Caco-2 (cell line): ENCODE measurements at regions of chr6 and their contacts with region 1.

Region 1: GRCh38 chr6:108558372-108559096 is 2.2 kb upstream of the FOXO3 start:
- DNase-seq: peak; percentile 97 to 98
- H3K4me3 ChIP-seq: peak overlapping the region; percentile 77
- H3K4me3 Mint-ChIP-seq: peak overlapping the region; percentile 95
- H3K27ac Mint-ChIP-seq: peak overlapping the region; percentile 94
- H3K4me1 ChIP-seq: peaks cover 15% of the 10 kb centered on the region
- H3K4me1 Mint-ChIP-seq: peaks cover 27% of the 10 kb centered on the region
- H3K27me3 ChIP-seq: no peaks in the 10 kb centered on the region
- H3K27me3 Mint-ChIP-seq: no peaks in the 10 kb centered on the region
- CTCF ChIP-seq: no peak

Region 2: GRCh38 chr6:108655806-108656651 is 97.5 kb after region 1 on chr6:
- CTCF ChIA-PET with region 1: interaction called, 8 read pairs
- POLR2A ChIA-PET with region 1: no interaction called
- intact Hi-C with region 1: loop called (anchors 5 kb)
- DNase-seq: no peak
- H3K4me3 ChIP-seq: no peak overlapping the region
- H3K4me3 Mint-ChIP-seq: no peak overlapping the region
- H3K27ac Mint-ChIP-seq: no peak overlapping the region
- H3K4me1 ChIP-seq: no peaks in the 10 kb centered on the region
- H3K4me1 Mint-ChIP-seq: peaks cover 4% of the 10 kb centered on the region
- H3K27me3 ChIP-seq: no peaks in the 10 kb centered on the region
- H3K27me3 Mint-ChIP-seq: no peaks in the 10 kb centered on the region
- CTCF ChIP-seq: no peak

Region 3: GRCh38 chr6:108782179-108783041 is 223.9 kb after region 1 on chr6:
- CTCF ChIA-PET with region 1: interaction called, 4 read pairs
- POLR2A ChIA-PET with region 1: no interaction called
- intact Hi-C with region 1: loop called (anchors 2 kb)
- DNase-seq: peak; percentile 84 to 86
- H3K4me3 ChIP-seq: peak overlapping the region; percentile 30
- H3K4me3 Mint-ChIP-seq: peak overlapping the region; percentile 69
- H3K27ac Mint-ChIP-seq: no peak overlapping the region
- H3K4me1 ChIP-seq: 0 out of 2 replicates have a peak, but pooled peaks cover 7% of the 10 kb centered on the region
- H3K4me1 Mint-ChIP-seq: peaks cover 21% of the 10 kb centered on the region
- H3K27me3 ChIP-seq: no peaks in the 10 kb centered on the region
- H3K27me3 Mint-ChIP-seq: no peaks in the 10 kb centered on the region
- CTCF ChIP-seq: peak; percentile 72 to 92

Region 4: GRCh38 chr6:108874470-108875160 is 316.1 kb after region 1 on chr6:
- CTCF ChIA-PET with region 1: no interaction called
- POLR2A ChIA-PET with region 1: no interaction called
- intact Hi-C with region 1: no loop called
- DNase-seq: no peak
- H3K4me3 ChIP-seq: no peak overlapping the region
- H3K4me3 Mint-ChIP-seq: no peak overlapping the region
- H3K27ac Mint-ChIP-seq: no peak overlapping the region
- H3K4me1 ChIP-seq: no peaks in the 10 kb centered on the region
- H3K4me1 Mint-ChIP-seq: no peaks in the 10 kb centered on the region
- H3K27me3 ChIP-seq: no peaks in the 10 kb centered on the region
- H3K27me3 Mint-ChIP-seq: no peaks in the 10 kb centered on the region
- CTCF ChIP-seq: no peak

Region 5: DNA sequence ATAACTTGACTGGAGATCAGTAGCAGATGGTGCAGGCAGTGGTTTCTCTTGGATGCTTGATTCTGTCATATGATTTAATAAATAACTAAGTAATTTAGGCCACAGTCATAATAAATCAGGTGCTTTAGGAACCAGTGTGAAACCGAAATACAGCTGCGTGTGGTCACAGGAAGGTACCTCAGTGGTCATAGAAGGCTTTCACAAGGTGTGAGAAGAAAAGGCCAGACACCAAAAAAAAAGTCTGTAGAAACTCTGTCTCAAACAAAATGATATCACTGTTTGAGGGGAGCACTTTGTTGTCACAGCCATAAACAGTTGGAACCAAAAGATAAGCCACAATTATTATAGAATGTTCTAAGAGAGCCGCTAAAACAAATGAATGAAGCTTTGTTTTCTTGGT is 346.2 kb after region 1 on chr6:
- CTCF ChIA-PET with region 1: no interaction called
- POLR2A ChIA-PET with region 1: interaction called, 3 read pairs
- intact Hi-C with region 1: loop called (anchors 2 kb)
- DNase-seq: peak; percentile 52 to 63
- H3K4me3 ChIP-seq: no peak overlapping the region
- H3K4me3 Mint-ChIP-seq: peak overlapping the region; percentile 62
- H3K27ac Mint-ChIP-seq: peak overlapping the region; percentile 77
- H3K4me1 ChIP-seq: peaks cover 40% of the 10 kb centered on the region
- H3K4me1 Mint-ChIP-seq: peaks cover 38% of the 10 kb centered on the region
- H3K27me3 ChIP-seq: no peaks in the 10 kb centered on the region
- H3K27me3 Mint-ChIP-seq: no peaks in the 10 kb centered on the region
- CTCF ChIP-seq: no peak